ENCODE measurements at regions of chr19 and their contacts with region 1.

Region 1: DNA sequence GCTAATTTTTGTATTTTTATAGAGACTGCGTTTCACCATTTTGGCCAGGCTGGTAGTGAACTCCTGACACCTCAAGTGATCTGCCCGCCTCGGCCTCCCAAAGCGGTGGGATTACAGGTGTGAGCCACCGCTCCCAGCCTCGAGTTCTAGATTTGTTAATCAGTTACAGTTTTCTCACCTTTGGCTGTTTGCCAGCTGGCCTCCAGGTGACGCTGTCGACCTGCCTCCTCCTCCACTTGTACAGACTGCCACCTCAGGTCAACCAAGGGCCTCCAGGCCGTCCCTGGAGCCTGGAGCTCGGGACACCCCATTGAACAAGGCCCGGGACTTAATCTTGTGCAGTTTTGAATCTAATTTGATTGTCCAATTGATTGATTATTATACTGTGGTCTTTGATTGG is 45.5 kb downstream of the IER2 start:
- DNase-seq: no peak
- H3K4me3 ChIP-seq: no peak overlapping the region
- H3K27ac ChIP-seq: no peak overlapping the region
- H3K27me3 ChIP-seq: no peaks in the 10 kb centered on the region
- CTCF ChIP-seq: no peak

Region 2: DNA sequence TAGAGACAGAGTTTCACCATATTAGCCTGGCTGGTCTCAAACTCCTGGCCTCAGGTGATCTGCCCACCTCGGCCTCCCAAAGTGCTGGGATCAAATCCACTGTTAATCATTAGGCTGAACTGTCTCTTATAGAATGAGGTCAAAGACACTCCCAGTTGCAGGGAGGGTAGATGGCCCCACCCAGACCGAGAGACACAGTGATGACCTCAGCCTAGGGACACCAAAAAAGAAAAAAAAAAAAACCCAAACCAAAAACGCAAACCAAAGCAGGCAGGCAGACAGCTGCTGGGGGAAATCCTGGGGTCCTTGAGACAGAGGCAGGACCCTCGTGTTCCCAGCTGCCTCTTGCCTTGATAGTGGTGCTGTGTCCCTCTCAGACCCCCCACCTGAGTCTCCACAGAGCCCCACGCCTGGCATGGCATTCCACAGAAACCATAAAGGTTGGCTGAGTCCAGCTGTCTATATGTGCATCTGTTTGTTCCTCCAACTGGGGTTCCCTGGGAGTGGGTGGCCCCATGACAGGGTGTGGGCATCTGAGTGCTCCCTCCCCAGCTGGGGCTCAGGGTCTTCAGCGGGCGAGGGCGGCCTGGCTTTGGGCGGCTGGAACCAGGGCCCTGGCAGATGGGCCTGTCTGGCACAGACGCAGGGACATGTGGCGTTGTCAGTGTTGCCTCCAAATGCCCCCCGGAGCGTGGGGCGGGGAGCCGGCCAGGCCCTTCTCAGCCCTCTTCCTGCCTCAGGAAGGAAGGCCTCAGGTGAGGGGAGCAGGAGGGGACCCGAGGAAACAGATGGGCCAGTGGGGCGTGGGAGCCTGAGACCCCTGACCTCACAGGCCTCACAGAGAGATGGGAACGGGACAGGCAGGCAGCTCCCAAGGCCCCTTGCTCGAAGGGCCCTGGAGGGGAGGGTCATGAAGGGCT is 221.1 kb before region 1 on chr19:
- CTCF ChIA-PET with region 1: interaction called, 10 read pairs
- POLR2A ChIA-PET with region 1: no interaction called
- DNase-seq: no peak
- H3K4me3 ChIP-seq: no peak overlapping the region
- H3K27ac ChIP-seq: no peak overlapping the region
- H3K27me3 ChIP-seq: no peaks in the 10 kb centered on the region
- CTCF ChIP-seq: no peak

Region 3: GRCh38 chr19:13162518-13163314 is 33.0 kb before region 1 on chr19:
- CTCF ChIA-PET with region 1: interaction called, 10 read pairs
- POLR2A ChIA-PET with region 1: no interaction called
- DNase-seq: peak; percentile 91
- H3K4me3 ChIP-seq: peak overlapping the region; percentile 49
- H3K27ac ChIP-seq: peak overlapping the region; percentile 97
- H3K27me3 ChIP-seq: no peaks in the 10 kb centered on the region
- CTCF ChIP-seq: no peak

Region 4: GRCh38 chr19:13176345-13176744 is 19.3 kb before region 1 on chr19:
- CTCF ChIA-PET with region 1: interaction called, 26 read pairs
- POLR2A ChIA-PET with region 1: no interaction called
- DNase-seq: no peak
- H3K4me3 ChIP-seq: no peak overlapping the region
- H3K27ac ChIP-seq: no peak overlapping the region
- H3K27me3 ChIP-seq: no peaks in the 10 kb centered on the region
- CTCF ChIP-seq: no peak

Region 5: GRCh38 chr19:13220847-13221246 is 25.2 kb after region 1 on chr19:
- CTCF ChIA-PET with region 1: interaction called, 10 read pairs
- POLR2A ChIA-PET with region 1: no interaction called
- DNase-seq: no peak
- H3K4me3 ChIP-seq: no peak overlapping the region
- H3K27ac ChIP-seq: no peak overlapping the region
- H3K27me3 ChIP-seq: no peaks in the 10 kb centered on the region
- CTCF ChIP-seq: no peak

Region 6: DNA sequence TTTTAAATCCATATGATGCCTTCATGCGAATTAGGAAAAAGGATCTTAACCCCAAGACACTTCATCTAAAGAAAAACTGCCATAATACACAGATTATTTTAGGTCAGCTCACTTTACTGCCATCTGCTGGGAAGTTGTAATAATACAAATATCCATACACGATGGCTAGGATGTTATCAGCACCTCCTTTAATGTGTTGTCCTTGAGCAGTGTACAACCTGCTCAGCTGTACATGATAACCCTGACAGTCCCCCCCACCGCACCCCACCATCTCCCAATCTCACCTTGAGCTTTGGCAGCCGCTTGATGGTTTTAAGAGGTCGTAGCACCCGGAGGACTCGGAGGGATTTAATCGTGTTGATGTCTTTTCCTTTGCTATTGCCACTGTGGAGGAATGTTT is 66.8 kb after region 1 on chr19:
- CTCF ChIA-PET with region 1: interaction called, 21 read pairs
- POLR2A ChIA-PET with region 1: no interaction called
- DNase-seq: no peak
- H3K4me3 ChIP-seq: no peak overlapping the region
- H3K27ac ChIP-seq: no peak overlapping the region
- H3K27me3 ChIP-seq: no peaks in the 10 kb centered on the region
- CTCF ChIP-seq: peak; percentile 62

Region 7: DNA sequence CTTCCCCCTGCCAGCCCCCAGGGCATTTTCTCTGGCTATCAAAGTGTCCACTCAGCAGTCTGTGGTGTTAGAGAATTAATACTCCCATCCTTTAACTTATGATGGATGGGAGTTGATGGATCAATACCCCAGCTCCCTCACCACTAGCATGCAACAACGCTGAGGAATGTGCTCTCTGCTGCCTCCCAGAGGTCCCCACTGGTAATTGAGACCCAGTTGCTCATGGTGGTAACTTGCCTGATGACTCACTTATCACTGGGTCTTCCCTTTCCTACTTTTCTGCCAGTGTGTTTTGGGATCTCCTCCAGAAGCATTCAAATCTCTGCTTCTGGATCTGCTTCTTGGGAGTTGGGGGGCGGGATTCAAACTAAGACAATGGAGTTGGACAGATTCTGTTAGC is 330.9 kb after region 1 on chr19:
- CTCF ChIA-PET with region 1: no interaction called
- POLR2A ChIA-PET with region 1: no interaction called
- DNase-seq: no peak
- H3K4me3 ChIP-seq: no peak overlapping the region
- H3K27ac ChIP-seq: no peak overlapping the region
- H3K27me3 ChIP-seq: peaks cover 3% of the 10 kb centered on the region
- CTCF ChIP-seq: peak; percentile 25; the same call in 1 of the 2 replicates

Measured in AG04450 (cell line).